ENCODE measurements at regions of chr6 and their contacts with region 1.

Region 1: GRCh38 chr6:125858427-125859320 is 67.9 kb downstream of the NCOA7 start:
- DNase-seq: peak; percentile 81 to 82
- H3K4me3 ChIP-seq: no peak overlapping the region
- H3K4me3 Mint-ChIP-seq: no peak overlapping the region
- H3K27ac Mint-ChIP-seq: peak overlapping the region; percentile 69
- H3K4me1 ChIP-seq: peaks cover 13% of the 10 kb centered on the region
- H3K4me1 Mint-ChIP-seq: peaks cover 18% of the 10 kb centered on the region
- H3K27me3 ChIP-seq: no peaks in the 10 kb centered on the region
- H3K27me3 Mint-ChIP-seq: no peaks in the 10 kb centered on the region
- CTCF ChIP-seq: peak; percentile 64 to 95

Region 2: GRCh38 chr6:125421853-125422252 is 436.8 kb before region 1 on chr6:
- CTCF ChIA-PET with region 1: no interaction called
- POLR2A ChIA-PET with region 1: no interaction called
- intact Hi-C with region 1: no loop called
- DNase-seq: peak; percentile 1 to 31
- H3K4me3 ChIP-seq: no peak overlapping the region
- H3K4me3 Mint-ChIP-seq: no peak overlapping the region
- H3K27ac Mint-ChIP-seq: no peak overlapping the region
- H3K4me1 ChIP-seq: no peaks in the 10 kb centered on the region
- H3K4me1 Mint-ChIP-seq: no peaks in the 10 kb centered on the region
- H3K27me3 ChIP-seq: no peaks in the 10 kb centered on the region
- H3K27me3 Mint-ChIP-seq: peaks cover 8% of the 10 kb centered on the region
- CTCF ChIP-seq: no peak

Region 3: DNA sequence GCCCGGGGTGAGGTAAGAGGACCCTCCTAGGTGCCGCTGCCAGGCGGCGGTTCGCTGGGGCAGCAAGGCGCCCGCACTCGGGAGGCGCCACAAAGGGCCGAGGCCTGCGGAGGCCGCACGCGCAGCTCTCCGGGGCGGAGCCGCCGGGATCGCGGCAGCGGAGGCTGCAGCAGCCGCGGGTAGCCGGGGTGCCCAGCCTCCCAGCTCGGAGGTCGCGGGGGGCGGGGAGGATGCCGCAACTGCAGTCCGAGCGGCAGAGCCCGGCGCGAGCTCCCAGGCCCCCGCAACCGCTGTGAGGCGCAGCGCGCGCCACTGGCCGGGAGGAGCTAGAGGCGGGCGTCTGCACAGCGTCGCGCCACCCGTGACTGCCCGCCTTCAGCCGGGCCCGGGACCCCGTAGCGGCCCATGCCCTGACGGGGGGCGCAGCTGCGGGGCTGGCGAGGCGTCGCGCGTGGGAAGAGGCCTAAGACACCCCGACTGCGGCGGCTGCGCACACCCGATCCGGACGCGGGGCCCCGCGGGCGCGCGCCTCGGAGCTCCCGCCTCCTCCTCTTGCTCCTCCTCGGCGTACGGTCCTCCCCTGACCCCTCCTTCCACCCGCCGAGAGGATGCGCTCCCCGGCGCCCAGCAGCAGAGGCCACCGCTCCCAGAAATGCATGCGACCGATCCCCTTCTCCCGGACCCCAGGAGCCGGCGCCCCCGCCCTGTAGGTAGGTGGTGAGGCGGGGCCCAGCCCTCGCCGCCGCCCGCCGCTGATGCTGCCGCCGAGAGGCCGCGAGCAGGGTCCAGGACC is 68.1 kb before region 1 on chr6 and contains the start of gene NCOA7:
- CTCF ChIA-PET with region 1: no interaction called
- POLR2A ChIA-PET with region 1: interaction called, 5 read pairs
- intact Hi-C with region 1: loop called (anchors 5 kb)
- DNase-seq: peak; percentile 82 to 84
- H3K4me3 ChIP-seq: peak within 1 kb of the TSS; percentile 91
- H3K4me3 Mint-ChIP-seq: peak within 1 kb of the TSS; percentile 91
- H3K27ac Mint-ChIP-seq: peak within 1 kb of the TSS; percentile 88
- H3K4me1 ChIP-seq: peaks cover 20% of the 10 kb centered on the region
- H3K4me1 Mint-ChIP-seq: peaks cover 13% of the 10 kb centered on the region
- H3K27me3 ChIP-seq: no peaks in the 10 kb centered on the region
- H3K27me3 Mint-ChIP-seq: no peaks in the 10 kb centered on the region
- CTCF ChIP-seq: no peak
- total RNA-seq, gene NCOA7: 62.0 and 67.9 TPM in 2 replicates

Region 4: GRCh38 chr6:125812394-125813292 is 46.0 kb before region 1 on chr6:
- CTCF ChIA-PET with region 1: no interaction called
- POLR2A ChIA-PET with region 1: no interaction called
- intact Hi-C with region 1: no loop called
- DNase-seq: no peak
- H3K4me3 ChIP-seq: no peak overlapping the region
- H3K4me3 Mint-ChIP-seq: peak overlapping the region; percentile 36
- H3K27ac Mint-ChIP-seq: peak overlapping the region; percentile 51
- H3K4me1 ChIP-seq: peaks cover 63% of the 10 kb centered on the region
- H3K4me1 Mint-ChIP-seq: peaks cover 35% of the 10 kb centered on the region
- H3K27me3 ChIP-seq: no peaks in the 10 kb centered on the region
- H3K27me3 Mint-ChIP-seq: no peaks in the 10 kb centered on the region
- CTCF ChIP-seq: no peak

Region 5: GRCh38 chr6:125832391-125833117 is 26.1 kb before region 1 on chr6:
- CTCF ChIA-PET with region 1: interaction called, 13 read pairs
- POLR2A ChIA-PET with region 1: no interaction called
- intact Hi-C with region 1: no loop called
- DNase-seq: no peak
- H3K4me3 ChIP-seq: no peak overlapping the region
- H3K4me3 Mint-ChIP-seq: no peak overlapping the region
- H3K27ac Mint-ChIP-seq: no peak overlapping the region
- H3K4me1 ChIP-seq: peaks cover 11% of the 10 kb centered on the region
- H3K4me1 Mint-ChIP-seq: peaks cover 5% of the 10 kb centered on the region
- H3K27me3 ChIP-seq: no peaks in the 10 kb centered on the region
- H3K27me3 Mint-ChIP-seq: no peaks in the 10 kb centered on the region
- CTCF ChIP-seq: no peak

Region 6: DNA sequence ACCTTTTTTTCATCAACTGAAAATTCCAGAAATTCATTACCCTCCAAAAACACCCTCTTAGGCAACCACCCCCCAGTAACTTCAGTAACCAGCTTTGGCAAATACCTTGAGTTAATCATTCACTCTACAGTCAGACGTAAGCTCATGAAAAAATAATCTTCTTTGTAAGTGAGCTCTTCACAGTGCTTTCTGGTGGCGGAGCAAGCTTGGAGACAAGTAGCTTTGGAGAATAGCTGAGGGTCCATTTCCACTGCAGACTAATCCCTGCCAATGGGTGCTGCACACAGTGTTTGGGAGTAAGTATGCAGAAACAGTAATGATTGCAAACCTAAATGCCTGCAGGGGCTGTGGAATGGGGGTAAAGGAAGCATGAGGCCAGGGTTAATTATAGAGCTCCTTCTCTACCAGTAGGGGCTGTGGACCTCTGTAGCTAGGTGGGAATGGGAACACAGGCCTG is 41.1 kb after region 1 on chr6:
- CTCF ChIA-PET with region 1: interaction called, 14 read pairs
- POLR2A ChIA-PET with region 1: no interaction called
- intact Hi-C with region 1: loop called (anchors 5 kb)
- DNase-seq: peak; percentile 69 to 75
- H3K4me3 ChIP-seq: peak overlapping the region; percentile 29
- H3K4me3 Mint-ChIP-seq: peak overlapping the region; percentile 71
- H3K27ac Mint-ChIP-seq: peak overlapping the region; percentile 53
- H3K4me1 ChIP-seq: peaks cover 41% of the 10 kb centered on the region
- H3K4me1 Mint-ChIP-seq: peaks cover 26% of the 10 kb centered on the region
- H3K27me3 ChIP-seq: no peaks in the 10 kb centered on the region
- H3K27me3 Mint-ChIP-seq: no peaks in the 10 kb centered on the region
- CTCF ChIP-seq: peak; percentile 18 to 33

Region 7: GRCh38 chr6:125906158-125906998 is 47.7 kb after region 1 on chr6:
- CTCF ChIA-PET with region 1: no interaction called
- POLR2A ChIA-PET with region 1: no interaction called
- intact Hi-C with region 1: loop called (anchors 5 kb)
- DNase-seq: peak; percentile 53 to 64
- H3K4me3 ChIP-seq: no peak overlapping the region
- H3K4me3 Mint-ChIP-seq: no peak overlapping the region
- H3K27ac Mint-ChIP-seq: peak overlapping the region; percentile 7
- H3K4me1 ChIP-seq: peaks cover 29% of the 10 kb centered on the region
- H3K4me1 Mint-ChIP-seq: peaks cover 51% of the 10 kb centered on the region
- H3K27me3 ChIP-seq: no peaks in the 10 kb centered on the region
- H3K27me3 Mint-ChIP-seq: no peaks in the 10 kb centered on the region
- CTCF ChIP-seq: peak; percentile 68 to 71

Region 8: DNA sequence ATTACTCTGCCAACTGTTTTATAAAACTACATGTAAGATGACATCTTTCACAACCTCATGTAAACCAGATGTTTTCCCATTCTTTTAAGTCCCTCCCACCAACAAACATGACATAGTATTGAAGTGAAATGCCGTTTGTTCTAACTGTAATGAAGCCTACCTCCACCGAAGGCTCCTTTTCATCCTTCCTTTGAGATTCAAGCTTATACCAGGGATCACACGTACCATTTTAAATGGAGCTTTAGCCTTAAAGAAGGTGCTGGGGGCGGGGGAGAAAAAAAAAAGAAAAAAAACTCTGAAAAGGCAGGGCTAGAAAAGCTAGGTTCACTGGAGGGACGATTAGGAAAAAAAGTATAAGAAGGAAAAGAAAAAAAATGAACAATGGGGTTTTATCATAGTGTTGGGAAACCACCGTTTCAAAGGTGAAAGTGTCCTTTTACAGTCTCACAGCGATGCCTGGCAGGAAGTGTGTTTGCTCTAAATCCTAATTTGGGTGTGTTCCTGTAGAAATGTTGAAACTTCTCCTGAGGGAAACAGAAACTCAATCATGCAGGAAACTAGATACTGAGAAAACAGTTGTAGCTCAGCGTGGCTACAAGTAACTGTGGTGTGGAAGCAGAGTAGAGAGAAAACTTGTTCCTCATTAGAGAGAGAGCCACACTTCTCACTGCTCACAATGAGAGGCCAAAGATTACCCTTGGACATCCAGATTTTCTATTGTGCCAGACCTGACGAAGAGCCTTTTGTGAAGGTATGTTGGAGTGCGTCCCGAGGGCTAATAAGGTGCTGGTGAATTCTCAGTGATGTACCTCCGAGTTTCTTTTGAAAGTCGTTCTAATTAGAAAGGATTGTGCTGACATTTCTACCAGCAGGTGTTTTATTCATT is 60.2 kb after region 1 on chr6:
- CTCF ChIA-PET with region 1: no interaction called
- POLR2A ChIA-PET with region 1: no interaction called
- intact Hi-C with region 1: loop called (anchors 5 kb)
- DNase-seq: peak; percentile 73
- H3K4me3 ChIP-seq: peak overlapping the region; percentile 37
- H3K4me3 Mint-ChIP-seq: peak overlapping the region; percentile 73
- H3K27ac Mint-ChIP-seq: peak overlapping the region; percentile 92
- H3K4me1 ChIP-seq: peaks cover 47% of the 10 kb centered on the region
- H3K4me1 Mint-ChIP-seq: peaks cover 59% of the 10 kb centered on the region
- H3K27me3 ChIP-seq: no peaks in the 10 kb centered on the region
- H3K27me3 Mint-ChIP-seq: no peaks in the 10 kb centered on the region
- CTCF ChIP-seq: no peak

Region 9: GRCh38 chr6:125974214-125974866 is 115.7 kb after region 1 on chr6:
- CTCF ChIA-PET with region 1: interaction called, 3 read pairs
- POLR2A ChIA-PET with region 1: no interaction called
- intact Hi-C with region 1: loop called (anchors 5 kb)
- DNase-seq: peak in 1 of 2 experiments; percentile 41
- H3K4me3 ChIP-seq: no peak overlapping the region
- H3K4me3 Mint-ChIP-seq: no peak overlapping the region
- H3K27ac Mint-ChIP-seq: no peak overlapping the region
- H3K4me1 ChIP-seq: no peaks in the 10 kb centered on the region
- H3K4me1 Mint-ChIP-seq: no peaks in the 10 kb centered on the region
- H3K27me3 ChIP-seq: no peaks in the 10 kb centered on the region
- H3K27me3 Mint-ChIP-seq: no peaks in the 10 kb centered on the region
- CTCF ChIP-seq: peak; percentile 41 to 44

Region 10: GRCh38 chr6:126033696-126034095 is 175.0 kb after region 1 on chr6:
- CTCF ChIA-PET with region 1: no interaction called
- POLR2A ChIA-PET with region 1: no interaction called
- intact Hi-C with region 1: no loop called
- DNase-seq: peak; percentile 60 to 68
- H3K4me3 ChIP-seq: no peak overlapping the region
- H3K4me3 Mint-ChIP-seq: no peak overlapping the region
- H3K27ac Mint-ChIP-seq: peak overlapping the region; percentile 48
- H3K4me1 ChIP-seq: peaks cover 54% of the 10 kb centered on the region
- H3K4me1 Mint-ChIP-seq: peaks cover 37% of the 10 kb centered on the region
- H3K27me3 ChIP-seq: no peaks in the 10 kb centered on the region
- H3K27me3 Mint-ChIP-seq: no peaks in the 10 kb centered on the region
- CTCF ChIP-seq: peak; percentile 47 to 78